Naive thymus-derived CD8-positive, alpha-beta T cell (primary cell): ENCODE measurements at regions of chr22 and their contacts with region 1.

Region 1: GRCh38 chr22:37608477-37609239 is at the start of gene GGA1:
- DNase-seq: peak; percentile 92 to 99 (median 97)
- ATAC-seq: peak; percentile 74 to 78
- H3K4me3 Mint-ChIP-seq: peak within 1 kb of the TSS; percentile 88 to 96 (median 93)
- H3K27ac Mint-ChIP-seq: peak within 1 kb of the TSS; percentile 95 to 99 (median 98)
- H3K4me1 Mint-ChIP-seq: peaks cover 30 to 68% (median 62%) of the 10 kb centered on the region in 4 donors
- H3K27me3 Mint-ChIP-seq: no peaks in the 10 kb centered on the region
- polyA plus RNA-seq, gene GGA1: 20.3 to 24.5 (median 22.6) TPM

Region 2: DNA sequence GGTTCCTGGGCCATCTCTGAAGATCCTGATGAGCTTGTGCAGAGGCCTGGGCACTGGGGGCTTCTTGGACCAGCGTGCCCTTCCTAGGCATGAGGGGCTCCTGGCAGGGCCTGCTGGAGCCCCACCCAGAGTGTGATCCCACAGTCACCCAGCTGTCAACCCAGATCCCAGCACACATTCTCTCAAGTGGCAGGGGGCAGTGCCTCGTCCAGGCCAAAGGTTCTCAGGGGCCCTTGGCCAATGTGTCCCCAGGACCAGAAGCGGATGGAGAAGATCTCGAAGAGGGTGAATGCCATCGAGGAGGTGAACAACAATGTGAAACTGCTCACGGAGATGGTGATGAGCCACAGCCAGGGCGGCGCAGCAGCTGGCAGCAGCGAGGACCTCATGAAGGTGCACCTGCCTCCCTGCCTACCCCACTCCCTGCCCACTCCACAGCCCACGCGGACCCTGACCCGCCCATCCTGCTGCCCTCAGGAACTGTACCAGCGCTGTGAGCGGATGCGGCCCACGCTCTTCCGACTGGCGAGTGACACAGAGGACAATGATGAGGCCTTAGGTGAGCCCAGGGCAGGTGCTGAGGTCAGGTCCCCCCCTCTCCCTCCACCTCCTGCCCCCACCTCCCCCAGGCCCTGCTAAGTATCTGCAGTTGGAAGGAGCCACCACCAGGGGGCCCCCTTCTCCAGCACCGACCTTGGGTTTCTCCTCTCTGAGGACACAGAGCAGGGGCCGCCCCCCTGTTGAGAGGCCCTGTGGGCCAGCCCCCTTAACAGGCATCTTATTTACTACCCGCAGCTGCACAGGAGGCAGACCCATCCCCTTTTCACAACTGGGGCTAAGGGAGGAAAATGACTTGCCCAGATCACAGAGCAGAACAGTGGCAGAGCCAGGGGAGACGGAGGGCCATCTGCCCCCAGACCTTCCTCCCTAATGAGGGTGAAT is 14.7 kb after region 1 on chr22:
- POLR2A ChIA-PET with region 1: interaction called, 81 read pairs
- DNase-seq: peak; percentile 72 to 89 (median 79)
- ATAC-seq: peak; percentile 63 to 73
- H3K4me3 Mint-ChIP-seq: peak overlapping the region; percentile 42 to 90 (median 80)
- H3K27ac Mint-ChIP-seq: peak overlapping the region; percentile 87 to 99 (median 96)
- H3K4me1 Mint-ChIP-seq: peaks cover 19 to 50% (median 49%) of the 10 kb centered on the region in 4 donors
- H3K27me3 Mint-ChIP-seq: no peaks in the 10 kb centered on the region